ENCODE measurements at regions of chr4 and their contacts with region 1.

Region 1: GRCh38 chr4:69104719-69105275 is 8.5 kb downstream of the UGT2B7 start:
- DNase-seq: no peak
- ATAC-seq: no peak; the same call in 2 of the 3 replicates
- H3K4me3 ChIP-seq: no peak overlapping the region
- H3K27ac ChIP-seq: peak overlapping the region; percentile 40
- H3K4me1 ChIP-seq: peaks cover 55% of the 10 kb centered on the region
- H3K27me3 ChIP-seq: no peaks in the 10 kb centered on the region
- CTCF ChIP-seq: no peak
- EP300 ChIP-seq: no peak
- POLR2A ChIP-seq: no peak
- RAD21 ChIP-seq: no peak

Region 2: GRCh38 chr4:69120870-69121269 is 16.1 kb after region 1 on chr4:
- CTCF ChIA-PET with region 1: no interaction called
- POLR2A ChIA-PET with region 1: no interaction called
- in situ Hi-C with region 1: no loop called
- intact Hi-C with region 1: loop called (anchors 2 kb)
- DNase-seq: no peak
- ATAC-seq: no peak
- H3K4me3 ChIP-seq: no peak overlapping the region
- H3K27ac ChIP-seq: no peak overlapping the region
- H3K4me1 ChIP-seq: peaks cover 23% of the 10 kb centered on the region
- H3K27me3 ChIP-seq: no peaks in the 10 kb centered on the region
- CTCF ChIP-seq: no peak
- EP300 ChIP-seq: no peak
- POLR2A ChIP-seq: no peak
- RAD21 ChIP-seq: no peak